ENCODE measurements at regions of chr12 and their contacts with region 1.

Region 1: GRCh38 chr12:91382081-91382543 is 199.5 kb upstream of the DCN start:
- DNase-seq: peak; percentile 81
- H3K4me3 ChIP-seq: peak overlapping the region; percentile 66
- H3K27ac ChIP-seq: peak overlapping the region; percentile 75
- H3K4me1 ChIP-seq: no peaks in the 10 kb centered on the region
- H3K27me3 ChIP-seq: no peaks in the 10 kb centered on the region
- CTCF ChIP-seq: peak; percentile 93

Region 2: DNA sequence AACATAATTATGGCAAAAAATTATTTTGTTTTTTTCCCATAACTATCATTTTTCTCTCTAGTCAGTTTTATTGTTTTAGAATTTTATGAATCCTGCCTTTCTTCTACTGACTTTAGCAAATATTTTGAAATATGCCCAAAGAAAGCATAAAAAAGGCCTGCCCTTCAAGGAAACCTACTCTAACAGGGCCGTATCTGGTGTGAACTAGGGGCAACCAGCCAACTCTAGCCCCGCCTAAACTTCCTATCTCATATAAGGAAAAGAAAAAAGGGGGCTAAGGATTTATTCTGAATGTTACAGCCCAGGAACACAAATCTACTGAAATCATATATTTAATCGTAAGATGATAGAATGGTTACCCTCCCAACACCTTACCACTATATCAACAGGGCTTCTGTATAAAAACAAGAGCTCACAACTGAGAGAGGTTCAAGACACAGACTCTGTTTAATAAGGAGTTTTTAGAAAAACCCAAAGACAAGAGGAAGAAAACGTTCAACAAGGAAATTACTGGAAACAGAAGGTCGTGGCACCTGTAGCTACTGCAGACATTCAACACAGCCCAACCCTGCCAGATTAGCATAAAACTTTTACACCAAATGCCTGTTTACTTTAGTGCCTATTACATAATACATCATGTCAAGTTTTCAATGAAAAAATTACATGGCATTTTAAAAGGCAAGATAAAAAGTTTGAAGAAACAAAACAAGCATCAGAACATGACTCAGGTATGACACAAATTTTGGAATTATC is 364.4 kb before region 1 on chr12:
- intact Hi-C with region 1: no loop called
- DNase-seq: peak; percentile 17
- H3K4me3 ChIP-seq: no peak overlapping the region
- H3K27ac ChIP-seq: peak overlapping the region; percentile 61
- H3K4me1 ChIP-seq: no peaks in the 10 kb centered on the region
- H3K27me3 ChIP-seq: no peaks in the 10 kb centered on the region
- CTCF ChIP-seq: no peak

Region 3: DNA sequence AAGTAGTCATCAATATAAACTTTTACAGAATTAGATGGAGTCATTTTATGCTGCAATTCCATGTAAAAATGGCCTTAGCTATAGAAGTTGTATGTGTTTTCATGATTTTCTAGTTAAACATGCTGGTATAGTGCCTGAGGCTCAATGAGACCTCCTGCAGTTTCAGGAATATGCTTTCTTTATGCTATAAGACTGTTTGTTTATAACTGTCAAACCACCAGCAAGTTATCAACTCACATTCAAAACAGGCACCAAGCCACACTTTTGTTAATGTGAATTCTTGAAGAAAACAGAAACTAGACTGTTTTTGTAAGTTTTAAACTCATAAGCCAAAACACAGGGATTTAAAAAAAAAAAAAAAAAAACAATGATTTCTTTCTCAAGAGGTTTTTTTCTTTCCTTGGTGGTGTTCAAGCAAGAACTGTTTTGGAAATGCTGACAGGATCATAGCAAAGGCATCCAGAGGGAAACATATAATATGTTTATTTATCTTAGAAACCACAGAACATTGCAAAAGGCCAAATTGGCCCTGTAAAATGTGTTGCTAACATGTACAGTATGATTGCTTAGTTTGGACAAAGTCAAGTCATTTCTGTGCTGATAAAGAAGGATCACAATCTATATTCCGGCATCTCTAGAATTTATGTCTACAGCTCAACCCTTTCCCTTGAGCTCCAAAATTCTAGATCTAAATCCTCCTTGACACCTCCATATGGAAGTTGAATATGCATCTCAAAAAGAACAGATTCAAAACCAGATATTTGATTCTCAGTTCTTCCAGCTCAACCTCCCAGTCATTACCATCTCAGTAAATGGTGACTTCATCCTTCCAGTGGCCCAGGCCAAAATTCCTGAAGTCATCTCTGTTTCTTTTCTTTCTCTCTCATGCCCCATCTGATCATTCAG is 241.8 kb before region 1 on chr12:
- intact Hi-C with region 1: no loop called
- DNase-seq: no peak
- H3K4me3 ChIP-seq: no peak overlapping the region
- H3K27ac ChIP-seq: peak overlapping the region; percentile 67
- H3K4me1 ChIP-seq: peaks cover 14% of the 10 kb centered on the region
- H3K27me3 ChIP-seq: no peaks in the 10 kb centered on the region
- CTCF ChIP-seq: no peak

Region 4: GRCh38 chr12:92136965-92137721 is 755.0 kb after region 1 on chr12:
- intact Hi-C with region 1: loop called (anchors 10 kb)
- DNase-seq: no peak
- H3K4me3 ChIP-seq: peak overlapping the region; percentile 97
- H3K27ac ChIP-seq: peak overlapping the region; percentile 72
- H3K4me1 ChIP-seq: peaks cover 99% of the 10 kb centered on the region
- H3K27me3 ChIP-seq: no peaks in the 10 kb centered on the region
- CTCF ChIP-seq: no peak

Region 5: GRCh38 chr12:92570056-92570753 is 1188.1 kb after region 1 on chr12:
- intact Hi-C with region 1: loop called (anchors 5 kb)
- DNase-seq: no peak
- H3K4me3 ChIP-seq: no peak overlapping the region
- H3K27ac ChIP-seq: peak overlapping the region; percentile 30
- H3K4me1 ChIP-seq: peaks cover 20% of the 10 kb centered on the region
- H3K27me3 ChIP-seq: no peaks in the 10 kb centered on the region
- CTCF ChIP-seq: peak; percentile 86

Region 6: GRCh38 chr12:92649511-92650227 is 1267.6 kb after region 1 on chr12:
- intact Hi-C with region 1: loop called (anchors 10 kb)
- DNase-seq: no peak
- H3K4me3 ChIP-seq: no peak overlapping the region
- H3K27ac ChIP-seq: no peak overlapping the region
- H3K4me1 ChIP-seq: no peaks in the 10 kb centered on the region
- H3K27me3 ChIP-seq: no peaks in the 10 kb centered on the region
- CTCF ChIP-seq: peak; percentile 78